ENCODE measurements at regions of chr7 and their contacts with region 1.

Region 1: DNA sequence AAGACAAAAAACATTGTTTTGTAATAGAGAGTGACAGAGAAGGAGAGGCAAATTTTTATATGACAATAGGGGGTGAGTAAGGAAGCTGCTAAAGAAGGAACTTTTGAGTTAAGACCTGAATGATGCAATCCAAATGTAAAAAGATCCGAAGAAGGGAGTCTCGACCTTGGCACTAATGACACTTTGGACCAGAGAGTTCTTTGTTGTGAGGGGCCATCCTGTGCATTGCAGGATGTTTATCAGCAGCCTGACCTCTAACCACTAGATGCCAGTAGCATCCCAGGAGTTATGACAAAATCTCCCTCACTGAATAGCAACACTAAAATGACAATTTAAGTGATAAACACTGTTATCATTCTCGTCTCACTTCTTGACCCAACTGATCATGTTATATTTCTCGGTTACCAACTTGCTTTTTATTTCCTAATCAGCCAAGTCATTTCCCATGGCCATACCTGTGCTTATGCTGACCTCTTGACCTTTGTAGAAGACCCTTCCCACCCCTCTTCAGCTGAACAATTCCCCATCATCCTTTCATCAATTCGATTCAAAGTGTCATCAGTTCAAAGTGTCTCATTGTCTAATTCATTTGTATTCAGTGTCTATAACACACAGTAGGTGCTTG is 30.0 kb downstream of the DGKI start:
- DNase-seq: no peak
- ATAC-seq: peak in 1 of 8 donors; percentile 38
- H3K4me3 ChIP-seq: no peak overlapping the region
- H3K27ac ChIP-seq: no peak overlapping the region
- H3K4me1 ChIP-seq: peaks cover 0 to 14% (median 10%) of the 10 kb centered on the region in 9 donors
- H3K27me3 ChIP-seq: no peaks in the 10 kb centered on the region
- CTCF ChIP-seq: peak in 7 of 9 donors; percentile 23 to 50 (median 43)

Region 2: GRCh38 chr7:137626469-137627067 is 190.2 kb before region 1 on chr7:
- intact Hi-C with region 1: no loop called
- DNase-seq: peak in 1 of 2 donors; percentile 36
- ATAC-seq: peak in 3 of 8 donors; percentile 30 to 63 (median 38)
- H3K4me3 ChIP-seq: no peak overlapping the region
- H3K27ac ChIP-seq: no peak overlapping the region
- H3K4me1 ChIP-seq: no peaks in the 10 kb centered on the region
- H3K27me3 ChIP-seq: peaks cover 0 to 20% (median 0%) of the 10 kb centered on the region in 7 donors
- CTCF ChIP-seq: peak; percentile 27 to 78 (median 68)

Region 3: DNA sequence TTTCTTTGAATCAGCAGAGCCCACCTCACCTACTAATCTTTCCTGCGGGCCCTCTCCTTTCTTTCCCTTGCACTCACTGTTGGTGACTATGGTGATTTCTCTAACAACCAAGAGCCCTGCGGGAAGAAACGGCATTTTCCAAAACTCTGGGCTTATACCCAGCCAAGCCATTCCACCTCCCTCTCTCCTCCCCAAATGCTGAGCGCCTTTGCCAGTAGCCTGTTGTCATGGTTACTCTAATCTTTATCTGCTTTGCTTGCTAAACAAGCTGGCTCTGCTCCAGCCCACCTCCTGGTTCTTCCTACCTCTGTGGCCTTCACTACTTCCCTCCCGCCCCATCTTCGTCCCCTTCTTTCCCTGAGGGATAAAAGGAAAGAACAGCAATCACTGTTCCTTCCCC is 56.7 kb before region 1 on chr7:
- intact Hi-C with region 1: no loop called
- DNase-seq: no peak
- ATAC-seq: no peak
- H3K4me3 ChIP-seq: no peak overlapping the region
- H3K27ac ChIP-seq: no peak overlapping the region
- H3K4me1 ChIP-seq: peaks cover 0 to 9% (median 0%) of the 10 kb centered on the region in 9 donors
- H3K27me3 ChIP-seq: no peaks in the 10 kb centered on the region
- CTCF ChIP-seq: no peak

Region 4: GRCh38 chr7:137882261-137882668 is 65.5 kb after region 1 on chr7:
- intact Hi-C with region 1: loop called in 1 of 10 experiments (anchors 10 kb)
- DNase-seq: no peak
- ATAC-seq: peak in 3 of 8 donors; percentile 2 to 85 (median 81)
- H3K4me3 ChIP-seq: no peak overlapping the region
- H3K27ac ChIP-seq: peak overlapping the region in 4 of 10 donors; percentile 18 to 62 (median 35)
- H3K4me1 ChIP-seq: peaks cover 0 to 41% (median 14%) of the 10 kb centered on the region in 9 donors
- H3K27me3 ChIP-seq: no peaks in the 10 kb centered on the region
- CTCF ChIP-seq: no peak

Region 5: DNA sequence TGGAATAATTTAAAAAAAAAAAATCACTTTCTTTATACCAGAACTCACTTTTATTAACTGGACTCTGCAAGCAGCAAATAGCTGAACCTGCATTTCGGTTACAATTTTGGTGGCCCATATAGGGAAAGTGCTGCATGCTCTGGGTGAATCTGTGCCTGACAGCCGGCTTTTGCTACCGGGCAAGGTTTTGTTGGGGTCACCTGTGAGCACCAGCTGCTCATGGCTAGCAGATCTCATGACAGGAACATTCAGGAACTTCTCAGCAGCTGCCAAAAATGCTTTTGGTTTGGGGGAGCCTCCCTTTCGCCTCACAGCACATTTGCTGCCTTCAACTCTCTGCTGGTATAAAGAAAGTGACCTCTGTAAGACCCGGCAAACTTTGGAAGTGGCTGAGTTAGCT is 198.3 kb after region 1 on chr7:
- intact Hi-C with region 1: loop called in 1 of 10 experiments (anchors 10 kb)
- DNase-seq: no peak
- ATAC-seq: no peak
- H3K4me3 ChIP-seq: no peak overlapping the region
- H3K27ac ChIP-seq: no peak overlapping the region
- H3K4me1 ChIP-seq: no peaks in the 10 kb centered on the region
- H3K27me3 ChIP-seq: no peaks in the 10 kb centered on the region
- CTCF ChIP-seq: no peak